Motor neuron (in vitro differentiated cells): ENCODE measurements at regions of chr15 and their contacts with region 1.

Region 1: GRCh38 chr15:55168329-55168974 is 28.3 kb downstream of the RSL24D1 start:
- ATAC-seq: peak in 5 of 8 experiments; percentile 27 to 96 (median 88)
- H3K4me3 ChIP-seq: no peak overlapping the region
- H3K27ac ChIP-seq: no peak overlapping the region
- H3K4me1 ChIP-seq: no peaks in the 10 kb centered on the region

Region 2: GRCh38 chr15:53962332-53963241 is 1205.9 kb before region 1 on chr15:
- in situ Hi-C with region 1: loop called in 1 of 9 experiments (anchors 25 kb)
- ATAC-seq: no peak
- H3K4me3 ChIP-seq: no peak overlapping the region
- H3K27ac ChIP-seq: no peak overlapping the region
- H3K4me1 ChIP-seq: peaks cover 0 to 4% of the 10 kb centered on the region in 2 donors